ENCODE measurements at regions of chr19 and their contacts with region 1.

Region 1: DNA sequence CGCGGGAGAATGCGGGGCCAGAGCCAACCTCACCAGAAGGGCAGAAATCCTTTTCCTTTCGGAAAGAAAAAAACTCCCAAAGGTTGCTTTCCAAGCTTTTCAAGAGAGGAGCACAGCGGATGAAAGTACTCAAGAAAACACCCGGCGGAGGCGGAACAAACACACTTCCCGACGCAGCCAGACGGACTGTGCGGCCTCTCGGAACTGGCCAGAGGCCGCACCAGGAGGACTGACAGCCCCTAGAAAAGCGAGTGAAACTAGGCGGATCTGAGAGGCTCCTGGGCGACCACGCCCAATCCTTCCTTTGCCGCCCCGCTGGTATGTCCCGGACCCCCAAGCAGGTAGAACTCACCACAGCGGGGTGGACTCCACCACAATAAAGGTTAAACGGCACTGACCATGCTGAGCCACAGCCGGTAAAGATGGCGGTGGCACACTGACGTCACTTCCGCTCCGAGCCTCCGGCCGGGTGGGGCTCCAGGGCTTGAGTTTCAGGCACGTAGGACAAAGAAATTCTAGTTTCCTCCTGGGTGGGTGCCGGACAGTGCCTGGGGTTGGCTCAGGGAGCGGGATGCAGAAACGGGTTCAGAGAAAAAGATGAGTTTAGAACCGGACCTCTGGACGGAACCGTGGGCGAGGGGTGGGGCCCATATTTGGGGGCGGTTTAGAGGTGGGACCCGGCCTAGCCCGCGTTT is at the start of gene ZNF562:
- DNase-seq: peak; percentile 89
- H3K4me3 ChIP-seq: peak within 1 kb of the TSS; percentile 68 to 98 (median 77)
- H3K27ac ChIP-seq: peak within 1 kb of the TSS; percentile 95
- H3K4me1 ChIP-seq: no peaks in the 10 kb centered on the region
- H3K27me3 ChIP-seq: no peaks in the 10 kb centered on the region
- CTCF ChIP-seq: no peak
- total RNA-seq, gene ZNF562: 42.8 to 42.9 TPM

Region 2: GRCh38 chr19:8832132-8833021 is 842.4 kb before region 1 on chr19 and contains the starts of genes MBD3L1 and ZNF558:
- CTCF ChIA-PET with region 1: no interaction called
- dilution Hi-C with region 1: no loop called
- in situ Hi-C with region 1: no loop called
- intact Hi-C with region 1: loop called (anchors 5 kb)
- DNase-seq: peak; percentile 95
- H3K4me3 ChIP-seq: peak within 1 kb of the TSS; percentile 48 to 64 (median 51)
- H3K27ac ChIP-seq: no peak within 1 kb of the TSS
- H3K4me1 ChIP-seq: no peaks in the 10 kb centered on the region
- H3K27me3 ChIP-seq: no peaks in the 10 kb centered on the region
- CTCF ChIP-seq: no peak
- total RNA-seq, gene MBD3L1: not detected
- total RNA-seq, gene ZNF558: 21.2 to 38.3 TPM

Region 3: GRCh38 chr19:9597027-9597426 is 77.8 kb before region 1 on chr19:
- CTCF ChIA-PET with region 1: no interaction called
- dilution Hi-C with region 1: no loop called
- in situ Hi-C with region 1: no loop called
- intact Hi-C with region 1: no loop called
- DNase-seq: peak; percentile 96
- H3K4me3 ChIP-seq: no peak overlapping the region
- H3K27ac ChIP-seq: peak overlapping the region; percentile 17
- H3K4me1 ChIP-seq: peaks cover 15% of the 10 kb centered on the region
- H3K27me3 ChIP-seq: no peaks in the 10 kb centered on the region
- CTCF ChIP-seq: no peak

Region 4: DNA sequence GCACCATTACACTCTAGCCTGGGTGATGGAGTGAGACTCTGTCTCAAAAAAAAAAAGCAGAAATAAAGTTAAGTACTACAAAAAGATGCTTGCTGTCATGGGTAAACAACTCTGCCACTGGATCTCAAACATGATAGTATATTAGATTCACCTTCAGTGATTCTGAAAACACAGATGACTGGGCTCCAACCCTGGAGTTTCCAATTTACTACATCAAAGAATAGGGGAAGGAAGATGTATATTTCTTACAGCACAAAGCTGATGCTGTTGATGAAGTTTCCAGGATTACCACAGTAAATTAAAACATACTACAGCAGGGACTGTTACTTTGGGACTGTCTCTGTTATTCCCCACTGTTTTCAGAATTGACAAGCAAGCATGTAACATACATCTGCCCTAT is 59.0 kb before region 1 on chr19:
- CTCF ChIA-PET with region 1: no interaction called
- dilution Hi-C with region 1: loop called (anchors 5 kb)
- in situ Hi-C with region 1: no loop called
- intact Hi-C with region 1: no loop called
- DNase-seq: no peak
- H3K4me3 ChIP-seq: no peak overlapping the region
- H3K27ac ChIP-seq: no peak overlapping the region
- H3K4me1 ChIP-seq: peaks cover 6% of the 10 kb centered on the region
- H3K27me3 ChIP-seq: no peaks in the 10 kb centered on the region
- CTCF ChIP-seq: no peak

Region 5: GRCh38 chr19:9727644-9728043 is 52.8 kb after region 1 on chr19:
- CTCF ChIA-PET with region 1: no interaction called
- dilution Hi-C with region 1: loop called (anchors 5 kb)
- in situ Hi-C with region 1: no loop called
- intact Hi-C with region 1: no loop called
- DNase-seq: no peak
- H3K4me3 ChIP-seq: no peak overlapping the region
- H3K27ac ChIP-seq: no peak overlapping the region
- H3K4me1 ChIP-seq: no peaks in the 10 kb centered on the region
- H3K27me3 ChIP-seq: no peaks in the 10 kb centered on the region
- CTCF ChIP-seq: no peak

Region 6: DNA sequence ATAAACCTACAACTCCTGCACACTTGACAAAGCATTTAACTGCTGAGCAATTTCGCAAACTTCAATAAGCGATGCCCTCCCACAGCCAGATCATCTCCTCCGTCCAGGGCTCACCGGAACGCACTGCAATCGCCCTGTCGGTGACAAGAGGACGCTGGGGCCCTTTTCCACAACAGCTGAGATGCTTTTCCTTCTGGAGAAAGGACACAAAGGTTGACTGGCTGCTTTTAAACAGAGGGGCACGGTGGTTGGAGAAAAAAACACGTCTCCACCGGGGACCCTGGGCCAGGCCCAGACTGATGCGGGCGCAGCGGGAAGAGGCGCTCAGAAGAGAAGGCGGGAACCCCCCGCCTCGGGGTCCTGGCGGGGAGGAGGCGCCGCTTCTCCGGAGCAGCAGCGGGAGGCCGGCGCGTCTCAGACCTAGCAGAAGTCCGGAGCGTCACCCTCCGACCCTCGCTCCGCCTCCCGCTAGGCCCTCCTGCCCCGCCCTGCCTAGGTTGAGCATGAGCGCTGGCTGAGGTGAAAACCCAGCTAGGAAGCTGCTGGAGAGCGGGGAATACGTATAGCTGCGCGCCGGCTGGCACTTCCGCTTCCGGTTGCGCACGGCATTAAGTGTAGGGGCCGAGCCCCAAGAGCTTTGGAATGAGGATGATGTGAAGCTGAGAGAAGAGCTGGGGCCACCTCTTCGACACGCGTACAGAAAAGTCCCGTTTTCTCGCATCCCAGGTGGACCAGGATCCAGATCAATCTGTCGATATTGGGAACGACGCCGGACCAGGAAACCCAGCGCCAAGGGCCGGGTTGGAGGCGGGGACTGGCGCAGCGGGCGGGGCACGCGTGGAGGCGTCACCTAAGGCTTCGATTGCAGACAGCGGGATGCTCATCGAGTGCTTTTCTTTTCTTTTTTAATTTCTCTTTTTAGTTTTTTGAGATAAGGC is 93.6 kb after region 1 on chr19 and contains the start of gene ZNF846:
- CTCF ChIA-PET with region 1: no interaction called
- dilution Hi-C with region 1: loop called (anchors 5 kb)
- in situ Hi-C with region 1: no loop called
- intact Hi-C with region 1: loop called (anchors 1 kb)
- DNase-seq: peak; percentile 95
- H3K4me3 ChIP-seq: peak within 1 kb of the TSS; percentile 65 to 87 (median 80)
- H3K27ac ChIP-seq: peak within 1 kb of the TSS; percentile 84
- H3K4me1 ChIP-seq: peaks cover 3% of the 10 kb centered on the region
- H3K27me3 ChIP-seq: no peaks in the 10 kb centered on the region
- CTCF ChIP-seq: no peak
- total RNA-seq, gene ZNF846: 10.1 to 13.0 TPM